ENCODE measurements at regions of chr12 and their contacts with region 1.

Region 1: GRCh38 chr12:49866859-49867579 is 24.1 kb upstream of the BCDIN3D start:
- DNase-seq: peak; percentile 65
- H3K4me3 Mint-ChIP-seq: no peak overlapping the region
- H3K27ac Mint-ChIP-seq: no peak overlapping the region
- H3K4me1 Mint-ChIP-seq: no peaks in the 10 kb centered on the region
- H3K27me3 Mint-ChIP-seq: peaks cover 7% of the 10 kb centered on the region

Region 2: GRCh38 chr12:49945394-49946080 is 78.5 kb after region 1 on chr12:
- intact Hi-C with region 1: loop called (anchors 1 kb)
- DNase-seq: peak; percentile 74
- H3K4me3 Mint-ChIP-seq: peak overlapping the region; percentile 77
- H3K27ac Mint-ChIP-seq: peak overlapping the region; percentile 92
- H3K4me1 Mint-ChIP-seq: peaks cover 28% of the 10 kb centered on the region
- H3K27me3 Mint-ChIP-seq: peaks cover 2% of the 10 kb centered on the region

Region 3: DNA sequence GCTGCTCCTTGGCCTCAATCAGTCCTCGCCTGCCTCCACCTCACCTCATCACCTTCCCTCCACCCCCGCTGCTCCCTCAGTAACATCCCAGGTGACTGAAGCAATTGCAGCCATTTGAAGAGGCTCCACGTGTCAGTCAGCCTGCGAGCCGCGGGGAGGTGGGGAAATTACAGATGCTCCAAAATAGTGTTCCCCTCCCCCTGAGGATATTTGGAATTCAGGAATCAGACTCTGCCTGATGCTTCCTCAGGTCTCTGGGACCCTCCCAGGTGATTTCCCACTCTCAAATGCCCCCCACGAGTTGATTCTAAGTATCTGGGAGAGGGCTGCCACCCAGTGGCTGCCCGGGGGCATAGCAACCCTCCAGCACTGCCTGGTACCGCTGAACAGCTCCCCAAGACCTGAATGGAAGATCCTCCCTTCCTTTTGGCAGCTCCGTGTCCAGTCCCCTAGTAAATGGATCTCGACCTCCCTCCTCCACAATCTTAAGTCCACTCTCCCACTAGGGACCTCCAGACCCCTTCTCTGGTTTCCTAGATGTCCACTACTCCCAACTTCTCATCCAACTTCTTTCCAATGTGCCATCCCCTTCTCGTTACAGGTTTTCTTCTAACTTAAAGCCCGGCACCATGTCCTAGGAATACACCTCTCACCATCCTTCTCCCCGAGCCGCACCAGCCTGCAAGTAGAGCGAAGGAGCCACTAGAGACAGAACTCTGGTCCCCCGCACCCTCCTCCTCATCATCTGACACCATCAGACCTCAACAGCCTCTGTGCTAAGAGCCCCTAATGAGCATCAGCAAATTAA is 189.0 kb after region 1 on chr12:
- intact Hi-C with region 1: loop called (anchors 1 kb)
- DNase-seq: peak; percentile 34
- H3K4me3 Mint-ChIP-seq: peak overlapping the region; percentile 45
- H3K27ac Mint-ChIP-seq: peak overlapping the region; percentile 52
- H3K4me1 Mint-ChIP-seq: peaks cover 39% of the 10 kb centered on the region
- H3K27me3 Mint-ChIP-seq: peaks cover 57% of the 10 kb centered on the region